IMR-90 (cell line): ENCODE measurements at regions of chr1 and their contacts with region 1.

Region 1: GRCh38 chr1:193121616-193122593 is at the start of gene CDC73:
- DNase-seq: peak; percentile 95
- ATAC-seq: peak; percentile 97
- H3K4me3 ChIP-seq: peak within 1 kb of the TSS; percentile 71
- H3K27ac ChIP-seq: peak within 1 kb of the TSS; percentile 89
- H3K4me1 ChIP-seq: no peaks in the 10 kb centered on the region
- H3K27me3 ChIP-seq: no peaks in the 10 kb centered on the region
- CTCF ChIP-seq: peak; percentile 98
- POLR2A ChIP-seq: peak; percentile 91
- RAD21 ChIP-seq: peak; percentile 86
- total RNA-seq, gene CDC73: 29.6 and 44.7 TPM in 2 replicates

Region 2: DNA sequence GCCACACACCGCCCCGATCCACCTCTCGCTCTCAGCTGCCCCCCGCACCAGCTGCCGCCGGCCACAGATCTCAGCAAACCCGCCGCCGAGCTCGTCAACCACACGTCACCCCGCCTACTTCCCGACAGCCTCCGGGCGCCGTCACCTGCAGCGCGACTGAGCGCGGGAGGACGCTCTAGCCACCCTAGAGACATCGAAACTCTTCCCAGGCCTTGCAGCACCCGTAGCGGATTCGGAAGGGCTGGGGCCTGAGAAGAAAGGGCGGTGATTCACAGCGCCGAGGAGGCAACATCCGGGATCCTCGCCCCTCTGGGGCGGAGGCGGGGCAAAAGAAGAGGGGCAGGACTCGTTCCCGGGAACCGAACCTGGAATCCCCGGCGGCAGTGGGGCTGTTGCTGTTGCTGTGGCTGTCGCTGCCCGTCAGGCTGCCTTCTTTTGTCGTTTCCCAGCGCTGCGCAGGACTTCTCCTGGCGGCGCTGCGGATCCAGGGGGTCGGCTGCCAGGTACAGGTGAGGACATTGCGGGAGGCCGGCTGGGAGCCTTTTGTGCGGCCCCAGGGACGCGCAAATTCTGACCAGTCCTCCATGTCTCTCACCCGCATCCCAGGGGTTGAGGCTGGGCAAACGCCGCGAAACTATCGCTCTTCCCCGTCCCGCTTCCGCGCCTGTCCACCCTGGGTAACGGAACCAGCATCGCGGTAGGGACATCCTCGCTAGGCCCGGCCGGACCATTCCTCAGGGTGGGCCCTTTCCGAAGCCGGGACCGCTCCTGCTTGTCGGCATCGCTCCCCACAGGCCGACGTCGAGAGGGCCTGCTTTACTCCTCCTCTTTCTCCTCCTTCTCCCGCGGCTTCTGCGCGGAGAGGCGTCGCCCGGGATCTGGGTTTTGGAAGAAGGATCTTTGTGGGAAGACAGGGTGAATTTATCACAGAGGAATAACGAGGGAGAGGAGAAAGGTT is 62.4 kb before region 1 on chr1 and contains the starts of genes RO60 and UCHL5:
- CTCF ChIA-PET with region 1: no interaction called
- POLR2A ChIA-PET with region 1: no interaction called
- dilution Hi-C with region 1: no loop called
- in situ Hi-C with region 1: no loop called
- intact Hi-C with region 1: loop called (anchors 1 kb)
- DNase-seq: peak; percentile 99
- ATAC-seq: peak; percentile 89
- H3K4me3 ChIP-seq: peak within 1 kb of the TSS; percentile 82
- H3K27ac ChIP-seq: peak within 1 kb of the TSS; percentile 95
- H3K4me1 ChIP-seq: peaks cover 2% of the 10 kb centered on the region; the same call in 1 of the 2 replicates
- H3K27me3 ChIP-seq: no peaks in the 10 kb centered on the region
- CTCF ChIP-seq: no peak
- POLR2A ChIP-seq: peak; percentile 93
- RAD21 ChIP-seq: no peak
- total RNA-seq, gene RO60: 161 and 184 TPM in 2 replicates
- total RNA-seq, gene UCHL5: 12.9 and 25.8 TPM in 2 replicates

Region 3: GRCh38 chr1:193104906-193105820 is 16.7 kb before region 1 on chr1 and contains the start of gene GLRX2:
- CTCF ChIA-PET with region 1: interaction called, 4 read pairs
- POLR2A ChIA-PET with region 1: interaction called, 5 read pairs
- dilution Hi-C with region 1: no loop called
- in situ Hi-C with region 1: no loop called
- intact Hi-C with region 1: loop called (anchors 1 kb)
- DNase-seq: peak; percentile 85
- ATAC-seq: peak; percentile 96
- H3K4me3 ChIP-seq: peak within 1 kb of the TSS; percentile 90
- H3K27ac ChIP-seq: peak within 1 kb of the TSS; percentile 75
- H3K4me1 ChIP-seq: no peaks in the 10 kb centered on the region
- H3K27me3 ChIP-seq: no peaks in the 10 kb centered on the region
- CTCF ChIP-seq: 0 out of 2 replicates have a peak, but pooled peaks have one; percentile 8
- POLR2A ChIP-seq: peak; percentile 85
- RAD21 ChIP-seq: peak; percentile 48
- total RNA-seq, gene GLRX2: 2.0 and 12.8 TPM in 2 replicates

Region 4: GRCh38 chr1:193448682-193449461 is 327.0 kb after region 1 on chr1:
- CTCF ChIA-PET with region 1: no interaction called
- POLR2A ChIA-PET with region 1: no interaction called
- dilution Hi-C with region 1: no loop called
- in situ Hi-C with region 1: no loop called
- intact Hi-C with region 1: no loop called
- DNase-seq: no peak
- ATAC-seq: no peak
- H3K4me3 ChIP-seq: no peak overlapping the region
- H3K27ac ChIP-seq: no peak overlapping the region
- H3K4me1 ChIP-seq: no peaks in the 10 kb centered on the region
- H3K27me3 ChIP-seq: no peaks in the 10 kb centered on the region
- CTCF ChIP-seq: no peak
- POLR2A ChIP-seq: no peak
- RAD21 ChIP-seq: no peak

Region 5: GRCh38 chr1:194378517-194378916 is 1256.6 kb after region 1 on chr1:
- CTCF ChIA-PET with region 1: no interaction called
- POLR2A ChIA-PET with region 1: no interaction called
- dilution Hi-C with region 1: no loop called
- in situ Hi-C with region 1: no loop called
- intact Hi-C with region 1: loop called (anchors 5 kb)
- DNase-seq: peak; percentile 59
- ATAC-seq: peak; percentile 77
- H3K4me3 ChIP-seq: no peak overlapping the region
- H3K27ac ChIP-seq: no peak overlapping the region
- H3K4me1 ChIP-seq: no peaks in the 10 kb centered on the region
- H3K27me3 ChIP-seq: no peaks in the 10 kb centered on the region
- CTCF ChIP-seq: no peak
- POLR2A ChIP-seq: no peak
- RAD21 ChIP-seq: no peak